SK-N-SH (cell line): ENCODE measurements at regions of chr4 and their contacts with region 1.

Region 1: DNA sequence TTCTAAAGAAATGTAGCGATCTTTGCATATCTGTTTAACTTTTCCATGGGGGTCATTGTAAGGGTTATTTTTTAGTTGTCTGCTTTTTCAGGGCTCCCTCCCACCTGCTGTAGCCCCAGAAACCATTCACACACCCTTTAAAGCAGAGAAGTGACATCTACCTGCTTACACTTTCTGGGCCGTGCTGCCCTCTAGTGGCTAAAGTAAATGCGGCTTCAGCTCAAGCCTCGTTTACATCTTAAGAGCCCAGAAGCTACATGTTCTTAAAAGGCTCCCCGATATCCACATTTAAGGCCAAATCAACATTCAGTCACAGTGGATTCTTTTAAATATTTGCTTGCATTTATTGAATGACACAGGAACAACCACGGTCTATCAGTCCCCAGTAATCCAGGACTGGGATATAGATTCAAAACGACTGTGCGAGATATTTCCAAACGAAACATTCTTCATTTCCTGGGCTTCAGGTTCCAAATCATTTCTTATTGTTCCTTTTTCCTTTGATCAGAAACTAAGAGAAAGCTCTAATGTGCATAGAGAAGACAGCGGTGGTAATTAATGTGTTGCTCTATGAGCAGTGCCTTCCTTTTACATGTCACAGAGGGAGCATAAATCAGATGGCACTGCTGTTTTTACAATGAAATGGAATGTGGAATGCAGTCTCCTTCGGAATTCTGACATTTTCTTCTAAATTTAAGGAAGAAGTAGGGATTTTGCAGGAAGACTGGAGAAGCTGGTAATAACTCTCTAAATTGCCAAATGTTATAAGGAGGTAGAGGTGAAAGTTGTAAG is 119.9 kb downstream of the RASGEF1B start:
- DNase-seq: peak; percentile 20
- H3K4me3 ChIP-seq: peak overlapping the region in 1 of 2 experiments; percentile 25; a peak in 1 of 4 replicates
- H3K27ac ChIP-seq: no peak overlapping the region
- H3K4me1 ChIP-seq: no peaks in the 10 kb centered on the region
- H3K27me3 ChIP-seq: no peaks in the 10 kb centered on the region; the same call in 1 of the 2 replicates
- CTCF ChIP-seq: peak; percentile 96
- EP300 ChIP-seq: no peak
- RAD21 ChIP-seq: peak; percentile 69

Region 2: GRCh38 chr4:81179326-81179725 is 172.5 kb before region 1 on chr4:
- CTCF ChIA-PET with region 1: interaction called, 10 read pairs
- POLR2A ChIA-PET with region 1: no interaction called
- DNase-seq: no peak
- H3K4me3 ChIP-seq: no peak overlapping the region
- H3K27ac ChIP-seq: no peak overlapping the region
- H3K4me1 ChIP-seq: no peaks in the 10 kb centered on the region
- H3K27me3 ChIP-seq: no peaks in the 10 kb centered on the region
- CTCF ChIP-seq: no peak
- EP300 ChIP-seq: no peak
- RAD21 ChIP-seq: no peak

Region 3: DNA sequence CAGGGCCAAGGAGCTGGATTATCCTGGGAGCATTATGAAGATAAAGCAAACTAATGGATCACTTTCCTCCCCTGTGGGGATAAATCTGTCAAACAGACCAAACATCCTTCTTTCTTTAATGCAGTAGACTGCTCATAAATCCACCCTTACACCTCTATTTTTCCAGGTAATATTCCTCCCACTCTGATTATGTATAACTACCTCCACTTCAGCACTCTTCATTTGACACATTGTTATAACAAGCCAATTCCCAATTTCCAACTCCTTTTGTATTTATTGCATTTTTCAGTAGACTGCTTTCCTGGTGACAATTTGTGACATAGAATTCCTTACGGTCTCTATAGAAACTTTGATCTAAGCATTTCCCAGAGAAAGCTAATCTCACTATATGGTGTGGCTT is 21.8 kb before region 1 on chr4:
- CTCF ChIA-PET with region 1: interaction called, 16 read pairs
- POLR2A ChIA-PET with region 1: no interaction called
- DNase-seq: no peak
- H3K4me3 ChIP-seq: no peak overlapping the region
- H3K27ac ChIP-seq: no peak overlapping the region
- H3K4me1 ChIP-seq: no peaks in the 10 kb centered on the region
- H3K27me3 ChIP-seq: no peaks in the 10 kb centered on the region
- CTCF ChIP-seq: no peak
- EP300 ChIP-seq: no peak
- RAD21 ChIP-seq: no peak

Region 4: GRCh38 chr4:81369886-81370285 is 18.0 kb after region 1 on chr4:
- CTCF ChIA-PET with region 1: interaction called, 21 read pairs
- POLR2A ChIA-PET with region 1: no interaction called
- DNase-seq: no peak
- H3K4me3 ChIP-seq: no peak overlapping the region
- H3K27ac ChIP-seq: no peak overlapping the region
- H3K4me1 ChIP-seq: no peaks in the 10 kb centered on the region
- H3K27me3 ChIP-seq: no peaks in the 10 kb centered on the region; the same call in 1 of the 2 replicates
- CTCF ChIP-seq: no peak
- EP300 ChIP-seq: no peak
- RAD21 ChIP-seq: no peak

Region 5: GRCh38 chr4:81786063-81786763 is 434.4 kb after region 1 on chr4:
- CTCF ChIA-PET with region 1: no interaction called
- POLR2A ChIA-PET with region 1: no interaction called
- DNase-seq: no peak
- H3K4me3 ChIP-seq: no peak overlapping the region
- H3K27ac ChIP-seq: no peak overlapping the region
- H3K4me1 ChIP-seq: no peaks in the 10 kb centered on the region
- H3K27me3 ChIP-seq: no peaks in the 10 kb centered on the region
- CTCF ChIP-seq: no peak
- EP300 ChIP-seq: no peak
- RAD21 ChIP-seq: no peak